ENCODE measurements at regions of chr1 and their contacts with region 1.

Region 1: GRCh38 chr1:95233737-95234500 is at the start of gene RWDD3:
- DNase-seq: peak; percentile 84
- H3K4me3 ChIP-seq: peak within 1 kb of the TSS; percentile 89
- H3K27ac ChIP-seq: peak within 1 kb of the TSS; percentile 60
- H3K27me3 ChIP-seq: no peaks in the 10 kb centered on the region
- CTCF ChIP-seq: peak; percentile 55

Region 2: GRCh38 chr1:95084317-95085176 is 149.4 kb before region 1 on chr1:
- in situ Hi-C with region 1: loop called (anchors 25 kb)
- DNase-seq: peak; percentile 14
- H3K4me3 ChIP-seq: no peak overlapping the region
- H3K27ac ChIP-seq: no peak overlapping the region
- H3K27me3 ChIP-seq: peaks cover 2% of the 10 kb centered on the region
- CTCF ChIP-seq: peak; percentile 80

Measured in brain microvascular endothelial cell (primary cell).